ENCODE measurements at regions of chr1 and their contacts with region 1.

Region 1: DNA sequence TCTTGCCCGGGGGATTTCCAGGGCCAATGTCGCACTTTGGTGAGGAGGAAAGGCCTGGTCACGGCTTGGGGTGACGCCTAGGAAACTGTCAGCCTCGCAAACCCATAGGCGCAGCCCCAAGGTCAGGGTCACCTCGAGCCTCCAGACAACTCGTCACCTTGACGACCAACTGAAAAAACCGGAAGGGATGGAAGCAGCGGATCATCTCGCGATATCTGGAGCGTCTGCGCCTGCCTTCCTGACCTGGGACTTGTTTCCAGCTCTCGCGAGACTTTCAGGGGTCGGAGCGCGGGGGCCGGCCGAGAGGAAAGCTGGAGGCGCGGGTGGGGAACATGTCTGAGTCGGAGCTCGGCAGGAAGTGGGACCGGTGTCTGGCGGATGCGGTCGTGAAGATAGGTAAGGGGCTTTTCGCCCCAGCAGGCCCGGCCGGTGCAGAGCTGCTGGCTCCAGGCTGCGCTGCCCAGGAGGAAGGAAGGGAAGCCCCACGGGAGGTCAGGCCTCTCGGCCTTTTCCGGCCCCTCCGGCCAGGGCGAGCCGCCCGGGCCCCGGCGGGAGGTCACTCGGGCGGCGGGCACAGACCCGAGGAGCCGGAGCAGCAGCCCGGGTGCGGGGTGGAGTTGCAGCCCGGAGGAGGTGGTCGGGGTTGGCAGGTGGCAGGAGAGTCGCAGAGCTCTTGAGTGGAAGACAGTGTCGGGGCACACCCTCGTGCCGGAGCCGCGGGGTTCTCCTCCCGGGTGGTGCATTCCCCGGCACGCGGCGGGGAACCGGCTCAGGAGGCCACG is 47.2 kb upstream of the NBL1 start:
- DNase-seq: peak; percentile 96
- H3K4me3 Mint-ChIP-seq: peak overlapping the region; percentile 97
- H3K27ac Mint-ChIP-seq: peak overlapping the region; percentile 100
- H3K4me1 Mint-ChIP-seq: peaks cover 42% of the 10 kb centered on the region
- H3K27me3 Mint-ChIP-seq: peaks cover 6% of the 10 kb centered on the region

Region 2: DNA sequence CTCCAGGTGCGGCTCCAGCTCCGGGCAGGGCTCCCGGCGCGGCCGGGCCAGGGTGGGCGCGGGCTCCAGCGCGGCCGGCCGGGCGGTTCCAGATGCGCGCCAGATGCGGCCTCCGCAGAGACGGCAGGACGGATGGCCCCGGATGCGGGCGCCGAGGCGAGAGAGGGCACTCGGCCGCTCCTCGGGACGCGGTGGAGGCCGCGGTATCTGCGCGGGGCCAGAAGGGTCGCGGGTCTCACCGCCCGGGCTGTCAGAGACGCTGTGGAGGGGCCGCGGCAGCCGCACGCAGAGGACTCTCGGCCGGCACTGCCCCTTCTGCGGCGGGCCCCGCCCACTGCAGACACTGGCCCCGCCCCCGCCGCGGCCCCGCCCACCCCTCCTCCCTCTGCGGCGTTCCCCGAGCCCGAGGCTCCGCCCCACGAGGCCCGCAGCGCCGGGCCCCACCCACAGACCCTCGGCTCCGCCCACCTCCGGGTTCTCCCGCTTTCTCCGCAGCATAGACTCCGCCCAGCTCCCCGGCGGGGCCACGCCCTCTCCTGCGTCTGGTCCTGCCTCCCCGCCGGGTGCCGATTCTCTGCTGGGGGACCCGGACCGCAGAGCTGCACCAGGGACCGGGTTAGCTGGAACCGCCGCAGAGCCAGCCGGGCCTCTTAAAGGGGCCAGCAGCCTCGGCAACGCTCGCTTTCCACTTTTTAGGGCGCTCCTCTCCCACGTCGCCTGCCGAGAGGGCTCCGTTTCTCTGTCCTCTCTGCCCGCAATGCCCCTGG is 640.4 kb before region 1 on chr1 and contains the start of gene IFFO2:
- intact Hi-C with region 1: loop called (anchors 1 kb)
- DNase-seq: peak; percentile 97
- H3K4me3 Mint-ChIP-seq: peak within 1 kb of the TSS; percentile 89
- H3K27ac Mint-ChIP-seq: peak within 1 kb of the TSS; percentile 78
- H3K4me1 Mint-ChIP-seq: peaks cover 50% of the 10 kb centered on the region
- H3K27me3 Mint-ChIP-seq: peaks cover 26% of the 10 kb centered on the region
- total RNA-seq, gene IFFO2: 31.8 and 32.6 TPM in 2 replicates

Region 3: GRCh38 chr1:19311959-19312781 is 284.7 kb before region 1 on chr1 and contains the starts of genes AKR7A2 and SLC66A1:
- intact Hi-C with region 1: loop called (anchors 1 kb)
- DNase-seq: peak; percentile 93
- H3K4me3 Mint-ChIP-seq: peak within 1 kb of the TSS; percentile 91
- H3K27ac Mint-ChIP-seq: peak within 1 kb of the TSS; percentile 87
- H3K4me1 Mint-ChIP-seq: peaks cover 30% of the 10 kb centered on the region
- H3K27me3 Mint-ChIP-seq: no peaks in the 10 kb centered on the region
- total RNA-seq, gene AKR7A2: 30.0 and 31.1 TPM in 2 replicates
- total RNA-seq, gene SLC66A1: 9.9 and 12.0 TPM in 2 replicates

Region 4: DNA sequence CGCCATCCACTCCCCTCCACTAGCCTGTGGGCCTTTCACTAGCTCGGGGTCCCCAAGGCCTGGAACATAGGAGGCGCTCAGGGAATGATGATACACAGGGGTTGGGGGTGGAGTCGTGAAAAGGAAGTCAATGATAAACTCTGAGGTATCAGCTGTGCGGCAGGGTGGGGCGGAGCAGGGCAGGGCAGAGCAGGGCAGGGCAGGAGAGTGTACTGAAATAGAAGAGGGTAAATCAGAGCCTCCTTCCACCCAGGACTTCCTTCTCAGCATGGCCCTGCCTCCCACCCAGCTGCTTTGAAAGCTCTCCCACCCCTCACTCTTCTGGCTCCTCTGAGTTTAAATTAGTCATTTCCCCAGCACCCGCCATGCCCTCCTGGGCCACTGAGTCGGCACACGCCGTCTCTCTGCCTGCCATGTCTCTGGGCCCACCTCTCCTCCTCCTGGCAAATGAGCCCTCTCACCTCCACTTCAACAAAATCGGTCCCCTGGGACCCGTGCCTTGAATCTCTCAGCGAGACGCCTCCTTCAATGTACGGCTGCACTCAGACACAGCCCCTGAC is 128.4 kb before region 1 on chr1:
- intact Hi-C with region 1: loop called (anchors 5 kb)
- DNase-seq: peak; percentile 48
- H3K4me3 Mint-ChIP-seq: peak overlapping the region; percentile 45
- H3K27ac Mint-ChIP-seq: peak overlapping the region; percentile 88
- H3K4me1 Mint-ChIP-seq: peaks cover 88% of the 10 kb centered on the region
- H3K27me3 Mint-ChIP-seq: no peaks in the 10 kb centered on the region

Region 5: GRCh38 chr1:19643602-19644394 is 46.9 kb after region 1 on chr1 and contains the start of gene NBL1:
- intact Hi-C with region 1: loop called (anchors 1 kb)
- DNase-seq: peak; percentile 75
- H3K4me3 Mint-ChIP-seq: peak within 1 kb of the TSS; percentile 94
- H3K27ac Mint-ChIP-seq: peak within 1 kb of the TSS; percentile 95
- H3K4me1 Mint-ChIP-seq: peaks cover 33% of the 10 kb centered on the region
- H3K27me3 Mint-ChIP-seq: peaks cover 24% of the 10 kb centered on the region
- total RNA-seq, gene NBL1: 53.0 and 55.5 TPM in 2 replicates

Region 6: GRCh38 chr1:19882111-19883071 is 285.5 kb after region 1 on chr1 and contains the start of gene OTUD3:
- intact Hi-C with region 1: loop called (anchors 2 kb)
- DNase-seq: peak; percentile 95
- H3K4me3 Mint-ChIP-seq: peak within 1 kb of the TSS; percentile 90
- H3K27ac Mint-ChIP-seq: peak within 1 kb of the TSS; percentile 52
- H3K4me1 Mint-ChIP-seq: peaks cover 31% of the 10 kb centered on the region
- H3K27me3 Mint-ChIP-seq: peaks cover 2% of the 10 kb centered on the region
- total RNA-seq, gene OTUD3: 10.2 and 16.1 TPM in 2 replicates

Measured in activated T-helper 1 cell treated with anti-CD3 and anti-CD28 coated beads, Interleukin-12 subunit alpha, Interleukin-12 subunit beta, Interleukin-2, Interleukin-4 antibody, amounts not matched to agents 30 ng/mL and 10 ng/mL and 1 ng/mL, durations not matched to agents 14 hours and 24 hours and 36 hours (primary cell).